WTC11 (cell line): ENCODE measurements at regions of chr6 and their contacts with region 1.

Region 1: GRCh38 chr6:114342826-114343780 is at the start of gene HS3ST5:
- DNase-seq: peak; percentile 91
- ATAC-seq: peak; percentile 79
- H3K4me3 Mint-ChIP-seq: peak within 1 kb of the TSS; percentile 98
- H3K27ac Mint-ChIP-seq: peak within 1 kb of the TSS; percentile 81
- H3K4me1 Mint-ChIP-seq: peaks cover 43% of the 10 kb centered on the region
- H3K27me3 Mint-ChIP-seq: no peaks in the 10 kb centered on the region
- CTCF ChIP-seq: peak; percentile 43
- total RNA-seq, gene HS3ST5: 8.1 to 8.7 TPM (median 8.6 TPM) in 3 replicates

Region 2: GRCh38 chr6:114362957-114363356 is 19.9 kb after region 1 on chr6:
- CTCF ChIA-PET with region 1: interaction called, 27 read pairs
- POLR2A ChIA-PET with region 1: interaction called, 4 read pairs
- DNase-seq: peak; percentile 14
- ATAC-seq: peak; percentile 60
- H3K4me3 Mint-ChIP-seq: no peak overlapping the region
- H3K27ac Mint-ChIP-seq: peak overlapping the region; percentile 82
- H3K4me1 Mint-ChIP-seq: peaks cover 82% of the 10 kb centered on the region
- H3K27me3 Mint-ChIP-seq: no peaks in the 10 kb centered on the region
- CTCF ChIP-seq: no peak

Region 3: GRCh38 chr6:114407426-114408035 is 64.4 kb after region 1 on chr6:
- CTCF ChIA-PET with region 1: interaction called, 24 read pairs
- POLR2A ChIA-PET with region 1: interaction called, 14 read pairs
- DNase-seq: no peak
- ATAC-seq: peak; percentile 43
- H3K4me3 Mint-ChIP-seq: no peak overlapping the region
- H3K27ac Mint-ChIP-seq: peak overlapping the region; percentile 21
- H3K4me1 Mint-ChIP-seq: peaks cover 48% of the 10 kb centered on the region
- H3K27me3 Mint-ChIP-seq: no peaks in the 10 kb centered on the region
- CTCF ChIP-seq: no peak